OCI-LY7 (cell line): ENCODE measurements at regions of chr9 and their contacts with region 1.

Region 1: DNA sequence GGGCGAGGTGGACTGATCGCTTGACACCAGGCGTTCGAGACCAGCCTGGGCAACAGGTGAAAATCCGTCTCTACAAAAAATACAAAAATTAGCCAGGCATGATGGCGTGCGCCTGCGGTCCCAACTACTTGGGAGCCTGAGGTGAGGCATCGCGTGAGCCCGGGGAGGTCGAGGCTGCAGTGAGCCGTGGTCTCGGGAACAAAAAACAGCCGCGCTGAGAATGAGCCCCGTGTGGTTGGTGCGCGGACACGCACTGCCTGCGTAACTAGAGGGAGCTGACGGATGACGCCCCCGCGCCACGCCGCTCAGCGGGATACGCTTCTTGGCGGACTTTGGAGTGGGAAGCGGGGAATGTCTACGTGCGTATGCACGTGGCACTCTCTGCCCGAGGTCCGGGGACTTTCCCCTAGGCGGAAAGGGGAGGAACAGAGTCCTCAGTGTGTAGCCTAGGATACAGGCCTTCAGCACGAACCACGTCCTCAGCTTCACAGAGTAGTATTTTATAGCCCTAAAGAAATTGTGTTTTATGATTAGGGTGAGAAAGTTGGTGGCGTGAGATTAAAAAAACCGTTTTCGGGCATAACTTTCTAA is at the start of gene RMRP:
- DNase-seq: peak; percentile 96
- H3K4me3 ChIP-seq: peak within 1 kb of the TSS; percentile 81
- H3K27ac ChIP-seq: peak within 1 kb of the TSS; percentile 84
- H3K4me1 ChIP-seq: peaks cover 64% of the 10 kb centered on the region
- CTCF ChIP-seq: 0 out of 2 replicates have a peak, but pooled peaks have one; percentile 27
- total RNA-seq, gene RMRP: 21,739 and 26,575 TPM in 2 replicates

Region 2: GRCh38 chr9:35603987-35604577 is 53.6 kb before region 1 on chr9:
- CTCF ChIA-PET with region 1: interaction called, 6 read pairs
- POLR2A ChIA-PET with region 1: interaction called, 7 read pairs
- intact Hi-C with region 1: loop called (anchors 2 kb)
- DNase-seq: peak; percentile 100
- H3K4me3 ChIP-seq: peak overlapping the region; percentile 90
- H3K27ac ChIP-seq: peak overlapping the region; percentile 79
- H3K4me1 ChIP-seq: peaks cover 26% of the 10 kb centered on the region
- CTCF ChIP-seq: peak; percentile 90

Region 3: GRCh38 chr9:35646533-35647265 is 10.9 kb before region 1 on chr9:
- CTCF ChIA-PET with region 1: interaction called, 15 read pairs
- POLR2A ChIA-PET with region 1: interaction called, 47 read pairs
- intact Hi-C with region 1: no loop called
- DNase-seq: peak; percentile 93
- H3K4me3 ChIP-seq: peak overlapping the region; percentile 92
- H3K27ac ChIP-seq: peak overlapping the region; percentile 89
- H3K4me1 ChIP-seq: peaks cover 46% of the 10 kb centered on the region
- CTCF ChIP-seq: peak; percentile 83

Region 4: GRCh38 chr9:35696525-35697215 is 39.0 kb after region 1 on chr9:
- CTCF ChIA-PET with region 1: interaction called, 3 read pairs
- POLR2A ChIA-PET with region 1: interaction called, 3 read pairs
- intact Hi-C with region 1: loop called (anchors 2 kb)
- DNase-seq: peak; percentile 77
- H3K4me3 ChIP-seq: no peak overlapping the region
- H3K27ac ChIP-seq: no peak overlapping the region
- H3K4me1 ChIP-seq: no peaks in the 10 kb centered on the region
- CTCF ChIP-seq: peak; percentile 97

Region 5: GRCh38 chr9:35814841-35815543 is 157.4 kb after region 1 on chr9 and contains the start of gene HINT2:
- CTCF ChIA-PET with region 1: no interaction called
- POLR2A ChIA-PET with region 1: interaction called, 3 read pairs
- intact Hi-C with region 1: loop called (anchors 2 kb)
- DNase-seq: peak; percentile 98
- H3K4me3 ChIP-seq: peak within 1 kb of the TSS; percentile 93
- H3K27ac ChIP-seq: peak within 1 kb of the TSS; percentile 82
- H3K4me1 ChIP-seq: peaks cover 29% of the 10 kb centered on the region
- CTCF ChIP-seq: no peak
- total RNA-seq, gene HINT2: 74.3 and 82.5 TPM in 2 replicates

Region 6: DNA sequence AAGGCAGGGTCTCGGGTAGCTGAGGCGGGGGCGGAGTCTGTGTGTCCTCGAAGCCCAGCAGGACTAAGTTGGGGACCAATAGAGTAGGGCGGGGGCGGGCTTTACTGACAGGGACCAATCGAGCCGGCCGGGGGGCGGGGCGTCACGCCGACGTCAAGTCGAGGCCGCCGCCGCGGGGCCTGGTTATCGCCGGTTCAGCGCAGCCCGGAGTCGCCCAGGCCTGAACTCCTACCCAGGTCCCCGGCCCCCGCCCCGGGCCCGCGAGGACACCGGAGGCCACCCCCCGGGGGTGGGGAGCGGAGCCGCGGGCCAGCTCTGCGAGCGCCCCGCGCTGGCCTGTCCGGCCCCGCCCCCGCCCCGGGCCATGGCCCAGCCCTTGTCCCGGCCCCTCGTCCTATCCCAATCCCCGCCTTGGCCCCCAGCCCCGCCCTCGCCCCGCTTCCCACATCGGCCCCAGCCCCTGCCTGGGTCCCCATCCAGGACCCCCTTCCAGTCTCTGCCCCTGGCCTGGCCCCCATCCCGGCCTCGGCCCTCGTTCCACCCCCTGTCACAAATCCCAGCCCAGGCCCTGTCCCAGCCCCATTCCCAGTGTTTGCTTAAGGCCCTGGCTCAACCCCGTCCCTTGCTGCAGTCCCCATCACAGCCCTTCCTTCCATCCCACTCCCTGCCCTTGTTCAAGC is 171.6 kb after region 1 on chr9 and contains the start of gene TMEM8B:
- CTCF ChIA-PET with region 1: no interaction called
- POLR2A ChIA-PET with region 1: no interaction called
- intact Hi-C with region 1: loop called (anchors 5 kb)
- DNase-seq: peak; percentile 94
- H3K4me3 ChIP-seq: peak within 1 kb of the TSS; percentile 72
- H3K27ac ChIP-seq: no peak within 1 kb of the TSS
- H3K4me1 ChIP-seq: peaks cover 32% of the 10 kb centered on the region
- CTCF ChIP-seq: no peak
- total RNA-seq, gene TMEM8B: 3.1 and 3.2 TPM in 2 replicates

Region 7: GRCh38 chr9:35859310-35859989 is 201.8 kb after region 1 on chr9:
- CTCF ChIA-PET with region 1: no interaction called
- POLR2A ChIA-PET with region 1: no interaction called
- intact Hi-C with region 1: no loop called
- DNase-seq: no peak
- H3K4me3 ChIP-seq: no peak overlapping the region
- H3K27ac ChIP-seq: no peak overlapping the region
- H3K4me1 ChIP-seq: no peaks in the 10 kb centered on the region
- CTCF ChIP-seq: no peak